Right lobe of liver (tissue), 6 donors: ENCODE measurements at regions of chr12 and their contacts with region 1.

Region 1: GRCh38 chr12:121668750-121669520 is 519 bp downstream of the MORN3 start:
- DNase-seq: no peak
- ATAC-seq: no peak
- H3K4me3 ChIP-seq: no peak overlapping the region
- H3K27ac ChIP-seq: no peak overlapping the region
- H3K4me1 ChIP-seq: peaks cover 0 to 13% (median 0%) of the 10 kb centered on the region in 4 donors
- H3K27me3 ChIP-seq: no peaks in the 10 kb centered on the region
- CTCF ChIP-seq: peak; percentile 30 to 48 (median 46)
- POLR2A ChIP-seq: no peak

Region 2: GRCh38 chr12:121499929-121500793 is 168.8 kb before region 1 on chr12:
- intact Hi-C with region 1: loop called (anchors 10 kb)
- DNase-seq: peak; percentile 71 to 80 (median 80)
- ATAC-seq: peak; percentile 86 to 95 (median 88)
- H3K4me3 ChIP-seq: peak overlapping the region in 1 of 3 donors; percentile 18
- H3K27ac ChIP-seq: peak overlapping the region in 2 of 3 donors; percentile 17 to 24
- H3K4me1 ChIP-seq: peaks cover 0 to 18% (median 2%) of the 10 kb centered on the region in 4 donors
- H3K27me3 ChIP-seq: no peaks in the 10 kb centered on the region
- CTCF ChIP-seq: peak; percentile 79 to 100 (median 99)
- POLR2A ChIP-seq: no peak

Region 3: GRCh38 chr12:121550974-121551634 is 117.8 kb before region 1 on chr12:
- intact Hi-C with region 1: loop called in 1 of 2 experiments (anchors 10 kb)
- DNase-seq: peak in 1 of 3 donors; percentile 71
- ATAC-seq: peak; percentile 82 to 91 (median 85)
- H3K4me3 ChIP-seq: no peak overlapping the region
- H3K27ac ChIP-seq: peak overlapping the region in 2 of 3 donors; percentile 64 to 69
- H3K4me1 ChIP-seq: peaks cover 0 to 20% (median 8%) of the 10 kb centered on the region in 4 donors
- H3K27me3 ChIP-seq: no peaks in the 10 kb centered on the region
- CTCF ChIP-seq: no peak
- POLR2A ChIP-seq: no peak

Region 4: DNA sequence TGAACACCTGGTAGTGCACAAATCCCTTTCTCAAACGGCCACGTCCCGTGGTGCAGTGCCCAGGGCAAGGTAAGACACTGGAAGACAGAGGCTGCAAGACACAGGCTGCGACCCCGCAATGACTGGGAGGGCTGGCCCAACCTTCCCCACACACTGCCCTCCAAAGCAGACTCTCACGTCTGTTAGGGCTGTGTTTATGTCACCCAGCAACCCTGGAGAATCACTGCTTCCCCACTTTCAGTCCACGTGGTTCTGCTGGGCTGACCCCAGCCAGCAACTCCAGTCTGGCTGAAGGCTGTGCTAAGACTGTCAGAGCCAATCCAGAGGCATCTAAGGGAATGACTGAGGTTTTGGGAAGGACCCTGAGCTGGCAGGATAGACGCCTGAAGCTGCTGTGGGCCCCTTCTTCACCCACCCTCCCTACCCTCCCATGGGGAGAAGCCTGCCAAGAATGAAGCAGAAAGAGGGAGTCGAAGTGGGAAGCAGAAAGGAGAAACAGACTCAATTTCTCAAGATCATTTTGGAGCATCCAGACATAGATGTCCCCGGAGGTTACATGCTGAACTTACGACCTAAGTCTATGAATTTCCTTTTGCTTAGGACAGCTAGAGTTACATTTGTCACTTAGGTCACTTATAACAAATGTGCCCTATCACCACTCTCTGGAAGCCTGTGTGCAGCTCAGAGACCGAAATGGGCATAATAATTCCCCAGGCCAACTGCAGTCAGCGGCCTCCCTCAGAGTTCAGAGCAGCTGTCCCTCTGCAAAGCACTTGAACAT is 99.8 kb before region 1 on chr12:
- intact Hi-C with region 1: loop called in 1 of 2 experiments (anchors 10 kb)
- DNase-seq: no peak
- ATAC-seq: peak; percentile 60 to 78 (median 64)
- H3K4me3 ChIP-seq: no peak overlapping the region
- H3K27ac ChIP-seq: no peak overlapping the region
- H3K4me1 ChIP-seq: no peaks in the 10 kb centered on the region
- H3K27me3 ChIP-seq: no peaks in the 10 kb centered on the region
- CTCF ChIP-seq: no peak
- POLR2A ChIP-seq: no peak

Region 5: DNA sequence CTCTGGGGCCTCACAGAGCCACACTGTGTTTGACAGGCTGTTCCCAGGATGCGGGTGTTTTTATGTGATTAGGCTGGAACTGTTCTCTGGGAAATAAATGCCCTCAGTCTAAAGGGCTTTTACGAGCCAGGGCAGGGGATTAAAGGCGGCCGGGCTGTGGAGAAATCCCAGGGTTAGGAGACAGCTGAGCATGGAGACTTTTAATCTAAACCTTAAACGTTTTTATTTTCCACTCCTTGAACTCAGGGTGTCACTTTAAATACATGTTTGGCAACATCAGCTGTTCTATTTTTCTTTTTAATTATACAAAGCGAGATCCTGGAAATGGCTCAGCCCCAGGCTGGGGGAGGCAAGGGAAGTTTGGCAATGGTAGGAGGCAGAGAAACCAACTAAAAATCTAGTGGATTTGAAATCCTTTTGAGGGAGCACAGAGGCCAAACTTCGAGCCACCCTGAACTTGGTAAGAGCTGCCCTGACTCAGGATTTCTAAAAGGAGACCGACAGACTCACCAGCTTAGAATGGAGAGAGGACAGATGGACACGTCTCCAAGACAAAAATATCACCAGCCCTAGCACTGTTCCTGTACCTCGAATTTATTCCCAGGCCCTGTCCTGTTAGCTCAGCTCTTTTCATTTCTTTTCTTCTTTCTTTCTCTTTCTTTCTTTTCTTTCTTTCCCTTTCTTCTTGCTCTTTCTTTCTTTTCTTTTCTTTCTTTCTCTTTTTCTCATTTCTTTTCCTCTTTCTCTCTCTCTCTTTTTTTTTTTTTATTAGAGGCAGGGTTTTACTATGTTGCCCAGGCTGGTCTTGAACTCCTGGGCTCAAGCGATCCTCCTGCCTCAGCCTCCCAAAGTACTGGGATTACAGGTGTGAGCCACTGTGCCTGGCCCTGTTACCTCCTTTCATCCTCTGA is 58.4 kb before region 1 on chr12:
- intact Hi-C with region 1: loop called in 1 of 2 experiments (anchors 10 kb)
- DNase-seq: no peak
- ATAC-seq: peak in 1 of 4 donors; percentile 43
- H3K4me3 ChIP-seq: no peak overlapping the region
- H3K27ac ChIP-seq: no peak overlapping the region
- H3K4me1 ChIP-seq: no peaks in the 10 kb centered on the region
- H3K27me3 ChIP-seq: no peaks in the 10 kb centered on the region
- CTCF ChIP-seq: no peak
- POLR2A ChIP-seq: no peak

Region 6: DNA sequence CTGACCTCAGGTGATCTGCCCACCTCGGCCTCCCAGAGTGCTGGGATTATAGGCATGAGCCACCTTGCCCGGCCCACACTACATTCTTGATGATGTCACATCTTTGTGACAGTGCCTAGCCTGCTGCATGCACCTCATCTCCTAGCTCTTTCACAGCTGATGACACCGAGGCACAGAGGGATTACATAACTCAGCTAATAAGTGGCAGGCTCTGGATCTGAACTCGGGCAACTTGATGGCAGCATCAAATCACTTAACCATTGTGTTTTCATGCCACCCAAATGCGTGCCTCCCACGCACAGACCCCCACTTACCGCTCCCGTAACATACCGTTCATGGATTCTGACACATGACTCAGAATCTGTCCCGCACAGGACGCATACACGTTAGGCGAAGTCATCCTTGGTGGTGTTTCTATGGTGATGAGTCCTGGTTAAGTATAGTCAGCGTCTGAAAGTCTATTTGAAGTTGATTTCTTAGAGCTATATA is 51.0 kb after region 1 on chr12:
- intact Hi-C with region 1: no loop called
- DNase-seq: no peak
- ATAC-seq: no peak
- H3K4me3 ChIP-seq: no peak overlapping the region
- H3K27ac ChIP-seq: no peak overlapping the region
- H3K4me1 ChIP-seq: no peaks in the 10 kb centered on the region
- H3K27me3 ChIP-seq: no peaks in the 10 kb centered on the region
- CTCF ChIP-seq: no peak
- POLR2A ChIP-seq: no peak